Heart left ventricle (tissue), 16 donors: ENCODE measurements at regions of chr7 and their contacts with region 1.

Region 1: DNA sequence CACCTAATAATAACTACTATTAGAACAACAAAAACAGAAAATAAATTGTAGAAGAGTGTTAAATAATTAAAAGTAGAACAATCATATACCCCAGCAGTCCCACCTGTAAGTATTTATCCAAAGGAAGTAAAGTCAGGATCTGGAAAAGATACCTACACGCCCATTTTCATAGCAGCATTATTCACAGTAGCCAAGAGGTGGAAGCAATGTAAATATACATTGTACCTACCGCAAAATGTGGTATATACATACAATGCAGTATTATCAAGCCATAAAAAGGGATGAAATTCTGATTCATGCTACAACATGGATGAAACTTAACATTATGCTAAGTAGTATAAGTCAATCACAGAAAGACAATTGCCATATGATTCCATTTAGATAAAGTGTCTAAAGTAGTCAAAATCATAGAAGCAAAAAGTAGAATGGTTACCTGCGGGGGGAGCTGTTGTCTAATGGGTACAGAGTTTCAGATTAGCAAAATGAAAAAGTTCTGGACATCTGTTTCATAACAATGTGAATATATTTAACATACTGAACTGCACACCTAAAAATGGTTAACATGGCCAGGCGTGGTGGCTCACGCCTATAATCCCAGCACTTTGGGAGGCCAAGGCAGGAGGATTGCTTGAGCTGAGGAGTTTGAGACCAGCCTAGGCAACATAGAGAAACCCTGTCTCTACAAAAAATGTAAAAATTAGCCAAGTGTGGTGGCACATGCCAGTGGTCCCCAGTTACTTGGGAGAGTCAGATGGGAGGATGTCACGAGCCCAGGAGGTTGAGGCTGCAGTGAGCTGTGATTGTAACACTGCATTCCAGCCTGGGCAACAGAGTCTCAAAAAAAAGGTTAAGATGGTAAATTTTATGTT is 6.0 kb upstream of the TMED4 start:
- DNase-seq: peak in 1 of 5 donors; percentile 53
- ATAC-seq: peak in 3 of 4 donors; percentile 73 to 81 (median 74)
- H3K4me3 ChIP-seq: no peak overlapping the region
- H3K27ac ChIP-seq: no peak overlapping the region
- H3K4me1 ChIP-seq: peaks cover 0 to 8% (median 2%) of the 10 kb centered on the region in 12 donors
- H3K27me3 ChIP-seq: no peaks in the 10 kb centered on the region
- CTCF ChIP-seq: peak; percentile 41 to 74 (median 67)
- POLR2A ChIP-seq: no peak

Region 2: GRCh38 chr7:44333911-44334733 is 254.0 kb before region 1 on chr7:
- intact Hi-C with region 1: no loop called
- DNase-seq: no peak
- ATAC-seq: peak; percentile 55 to 81 (median 76)
- H3K4me3 ChIP-seq: no peak overlapping the region
- H3K27ac ChIP-seq: peak overlapping the region in 11 of 12 donors; percentile 49 to 85 (median 72)
- H3K4me1 ChIP-seq: peaks cover 0 to 33% (median 14%) of the 10 kb centered on the region in 12 donors
- H3K27me3 ChIP-seq: no peaks in the 10 kb centered on the region
- CTCF ChIP-seq: no peak
- POLR2A ChIP-seq: no peak

Region 3: GRCh38 chr7:44534501-44534900 is 53.6 kb before region 1 on chr7:
- intact Hi-C with region 1: no loop called
- DNase-seq: no peak
- ATAC-seq: peak in 3 of 4 donors; percentile 21 to 48 (median 46)
- H3K4me3 ChIP-seq: no peak overlapping the region
- H3K27ac ChIP-seq: no peak overlapping the region
- H3K4me1 ChIP-seq: peaks cover 0 to 6% (median 0%) of the 10 kb centered on the region in 12 donors
- H3K27me3 ChIP-seq: no peaks in the 10 kb centered on the region
- CTCF ChIP-seq: peak; percentile 19 to 60 (median 50)
- POLR2A ChIP-seq: no peak

Region 4: DNA sequence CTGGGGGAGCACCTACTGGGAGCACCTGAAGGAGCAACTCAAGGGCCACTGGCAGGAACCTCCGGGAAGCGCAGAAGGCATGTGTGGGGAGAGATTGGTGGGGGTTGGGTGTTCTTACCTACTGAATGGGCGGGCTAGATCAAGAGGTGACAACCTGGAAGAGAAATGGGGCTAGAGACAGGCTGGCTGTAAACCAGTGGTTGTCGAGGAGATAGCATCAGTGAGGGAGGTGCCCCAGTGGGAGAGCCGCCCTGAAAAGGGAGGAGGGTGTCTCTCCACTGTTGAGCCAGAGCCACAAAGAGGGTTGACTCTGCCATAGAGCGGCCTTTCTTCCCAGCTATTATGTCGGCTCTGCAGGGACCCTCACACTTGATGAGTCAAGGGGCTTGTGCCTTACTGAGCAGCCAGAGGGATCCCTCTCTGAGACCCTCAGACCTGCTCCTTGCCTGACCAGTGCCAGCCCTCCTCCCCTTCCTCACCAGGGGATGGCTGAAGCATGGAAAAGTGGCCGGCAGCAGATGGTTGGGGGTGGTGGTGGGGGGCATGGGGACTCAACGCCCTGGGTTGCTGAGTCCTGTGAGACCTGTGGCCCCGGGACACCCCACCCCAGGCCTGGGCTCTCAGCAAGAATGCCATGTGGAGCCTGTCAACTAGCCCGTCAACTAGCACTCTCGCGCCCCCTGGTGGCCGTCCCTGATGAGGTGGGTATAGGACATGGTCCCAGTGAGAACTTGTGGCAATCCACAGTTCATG is 333.7 kb after region 1 on chr7:
- intact Hi-C with region 1: loop called (anchors 2 to 5 kb)
- DNase-seq: peak; percentile 84 to 95 (median 88)
- ATAC-seq: peak; percentile 67 to 98 (median 95)
- H3K4me3 ChIP-seq: no peak overlapping the region
- H3K27ac ChIP-seq: no peak overlapping the region
- H3K4me1 ChIP-seq: peaks cover 0 to 5% (median 0%) of the 10 kb centered on the region in 12 donors
- H3K27me3 ChIP-seq: peaks cover 0 to under 1% (median 0%) of the 10 kb centered on the region in 9 donors
- CTCF ChIP-seq: peak; percentile 79 to 96 (median 88)
- POLR2A ChIP-seq: no peak

Region 5: GRCh38 chr7:45143616-45144015 is 555.5 kb after region 1 on chr7:
- intact Hi-C with region 1: loop called in 6 of 10 experiments (anchors 5 to 10 kb)
- DNase-seq: no peak
- ATAC-seq: no peak
- H3K4me3 ChIP-seq: no peak overlapping the region
- H3K27ac ChIP-seq: no peak overlapping the region
- H3K4me1 ChIP-seq: no peaks in the 10 kb centered on the region
- H3K27me3 ChIP-seq: peaks cover 0 to 13% (median 0%) of the 10 kb centered on the region in 9 donors
- CTCF ChIP-seq: no peak
- POLR2A ChIP-seq: no peak